Activated T-helper 2 cell treated with anti-CD3 and anti-CD28 coated beads, Interferon-gamma antibody, Interleukin-2, Interleukin-4, amounts not matched to agents 10 μg/mL and 5 μg/mL and 100 μg/mL, durations not matched to agents 14 hours and 24 hours and 36 hours (primary cell): ENCODE measurements at regions of chr10 and their contacts with region 1.

Region 1: DNA sequence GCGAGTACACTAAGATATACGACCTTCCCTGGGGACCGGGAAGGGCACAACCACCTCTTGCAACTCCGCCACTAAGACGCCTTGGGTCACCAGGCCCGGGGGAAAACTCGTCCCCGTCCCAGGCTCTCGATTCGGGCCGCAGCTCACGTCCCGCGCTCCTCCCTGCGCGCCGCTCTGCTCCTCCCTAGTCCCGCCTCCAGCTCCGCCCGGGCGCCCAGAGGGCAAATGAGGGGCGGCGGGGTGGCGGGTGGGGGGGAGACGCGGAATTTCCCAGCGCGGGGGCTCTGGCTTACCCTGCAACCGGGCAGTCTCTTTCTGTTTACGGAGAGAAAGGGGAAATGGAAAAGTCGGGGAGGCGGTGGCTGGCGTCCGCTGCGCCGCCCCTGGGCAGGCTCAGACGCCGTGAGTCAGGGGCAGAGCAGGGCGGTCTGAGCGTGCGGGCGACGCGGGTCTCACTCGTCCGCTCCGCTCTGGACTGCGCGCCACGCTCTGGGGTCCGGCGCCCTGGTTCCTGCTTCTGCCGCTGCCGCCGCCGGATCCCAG is at the start of gene MAP3K8:
- DNase-seq: peak; percentile 76
- H3K4me3 Mint-ChIP-seq: peak within 1 kb of the TSS; percentile 82
- H3K27ac Mint-ChIP-seq: peak within 1 kb of the TSS; percentile 76
- H3K4me1 Mint-ChIP-seq: peaks cover 53% of the 10 kb centered on the region
- H3K27me3 Mint-ChIP-seq: peaks cover 4% of the 10 kb centered on the region
- total RNA-seq, gene MAP3K8: 33.5 and 37.1 TPM in 2 replicates

Region 2: DNA sequence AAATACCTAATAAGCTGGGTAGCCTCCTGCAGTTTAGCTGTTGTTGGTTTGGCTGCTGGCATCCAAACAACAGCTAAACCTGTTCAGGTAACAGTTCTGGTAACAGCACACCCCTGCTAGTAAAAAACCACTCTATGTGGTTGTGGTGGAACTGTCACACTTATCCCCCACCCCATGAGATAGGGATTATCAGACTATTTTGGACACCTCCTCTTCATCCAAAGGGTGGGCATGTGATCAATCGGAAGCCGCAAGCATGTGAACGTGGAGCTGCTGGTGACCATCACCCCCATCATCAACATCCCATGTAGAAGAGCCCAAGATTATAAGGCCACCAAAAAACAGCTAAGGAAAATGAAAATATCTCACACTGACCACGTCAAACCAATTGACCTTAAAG is 87.2 kb before region 1 on chr10:
- intact Hi-C with region 1: no loop called
- DNase-seq: no peak
- H3K4me3 Mint-ChIP-seq: peak overlapping the region; percentile 57
- H3K27ac Mint-ChIP-seq: no peak overlapping the region
- H3K4me1 Mint-ChIP-seq: peaks cover 34% of the 10 kb centered on the region
- H3K27me3 Mint-ChIP-seq: no peaks in the 10 kb centered on the region

Region 3: DNA sequence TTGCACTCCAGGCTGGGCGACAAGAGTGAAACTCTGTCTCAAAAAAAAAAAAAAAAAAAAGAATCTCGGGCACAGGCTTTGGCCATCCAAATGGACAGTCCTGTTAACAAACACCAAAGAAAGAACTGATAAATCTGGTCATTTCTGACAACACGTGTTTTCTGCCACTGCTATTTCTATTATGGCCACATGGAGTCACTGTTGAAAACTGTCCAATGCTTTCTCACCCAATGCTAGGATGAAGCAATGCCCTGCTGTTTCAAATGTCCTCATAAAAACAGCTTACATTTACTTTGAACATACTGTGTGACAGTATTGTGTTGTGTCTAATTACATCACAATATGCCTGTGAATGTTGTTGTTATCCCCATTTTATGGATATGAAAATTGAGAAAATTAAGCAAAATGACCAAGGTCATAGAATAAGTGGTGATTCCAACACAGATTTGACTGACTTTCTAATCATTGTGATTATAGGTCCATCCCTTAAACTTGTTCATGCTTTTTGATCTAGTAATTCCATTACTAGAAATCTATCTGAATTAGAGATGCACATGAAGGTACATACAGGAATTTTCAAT is 19.7 kb before region 1 on chr10:
- intact Hi-C with region 1: loop called (anchors 1 kb)
- DNase-seq: no peak
- H3K4me3 Mint-ChIP-seq: no peak overlapping the region
- H3K27ac Mint-ChIP-seq: no peak overlapping the region
- H3K4me1 Mint-ChIP-seq: peaks cover 28% of the 10 kb centered on the region
- H3K27me3 Mint-ChIP-seq: peaks cover 2% of the 10 kb centered on the region

Region 4: GRCh38 chr10:30510169-30510930 is 76.5 kb after region 1 on chr10:
- intact Hi-C with region 1: loop called (anchors 1 kb)
- DNase-seq: no peak
- H3K4me3 Mint-ChIP-seq: no peak overlapping the region
- H3K27ac Mint-ChIP-seq: peak overlapping the region; percentile 62
- H3K4me1 Mint-ChIP-seq: peaks cover 37% of the 10 kb centered on the region
- H3K27me3 Mint-ChIP-seq: no peaks in the 10 kb centered on the region

Region 5: GRCh38 chr10:30645340-30645827 is 211.6 kb after region 1 on chr10:
- intact Hi-C with region 1: loop called (anchors 5 kb)
- DNase-seq: no peak
- H3K4me3 Mint-ChIP-seq: peak overlapping the region; percentile 40
- H3K27ac Mint-ChIP-seq: peak overlapping the region; percentile 50
- H3K4me1 Mint-ChIP-seq: peaks cover 40% of the 10 kb centered on the region
- H3K27me3 Mint-ChIP-seq: peaks cover 24% of the 10 kb centered on the region

Region 6: GRCh38 chr10:30701451-30702173 is 267.8 kb after region 1 on chr10:
- intact Hi-C with region 1: loop called (anchors 2 kb)
- DNase-seq: peak; percentile 77
- H3K4me3 Mint-ChIP-seq: peak overlapping the region; percentile 72
- H3K27ac Mint-ChIP-seq: peak overlapping the region; percentile 95
- H3K4me1 Mint-ChIP-seq: peaks cover 77% of the 10 kb centered on the region
- H3K27me3 Mint-ChIP-seq: no peaks in the 10 kb centered on the region

Region 7: GRCh38 chr10:32332299-32332750 is 1898.5 kb after region 1 on chr10:
- intact Hi-C with region 1: loop called (anchors 10 kb)
- DNase-seq: peak; percentile 80
- H3K4me3 Mint-ChIP-seq: peak overlapping the region; percentile 85
- H3K27ac Mint-ChIP-seq: peak overlapping the region; percentile 95
- H3K4me1 Mint-ChIP-seq: peaks cover 76% of the 10 kb centered on the region
- H3K27me3 Mint-ChIP-seq: no peaks in the 10 kb centered on the region